Naive thymus-derived CD8-positive, alpha-beta T cell (primary cell): ENCODE measurements at regions of chr1 and their contacts with region 1.

Region 1: DNA sequence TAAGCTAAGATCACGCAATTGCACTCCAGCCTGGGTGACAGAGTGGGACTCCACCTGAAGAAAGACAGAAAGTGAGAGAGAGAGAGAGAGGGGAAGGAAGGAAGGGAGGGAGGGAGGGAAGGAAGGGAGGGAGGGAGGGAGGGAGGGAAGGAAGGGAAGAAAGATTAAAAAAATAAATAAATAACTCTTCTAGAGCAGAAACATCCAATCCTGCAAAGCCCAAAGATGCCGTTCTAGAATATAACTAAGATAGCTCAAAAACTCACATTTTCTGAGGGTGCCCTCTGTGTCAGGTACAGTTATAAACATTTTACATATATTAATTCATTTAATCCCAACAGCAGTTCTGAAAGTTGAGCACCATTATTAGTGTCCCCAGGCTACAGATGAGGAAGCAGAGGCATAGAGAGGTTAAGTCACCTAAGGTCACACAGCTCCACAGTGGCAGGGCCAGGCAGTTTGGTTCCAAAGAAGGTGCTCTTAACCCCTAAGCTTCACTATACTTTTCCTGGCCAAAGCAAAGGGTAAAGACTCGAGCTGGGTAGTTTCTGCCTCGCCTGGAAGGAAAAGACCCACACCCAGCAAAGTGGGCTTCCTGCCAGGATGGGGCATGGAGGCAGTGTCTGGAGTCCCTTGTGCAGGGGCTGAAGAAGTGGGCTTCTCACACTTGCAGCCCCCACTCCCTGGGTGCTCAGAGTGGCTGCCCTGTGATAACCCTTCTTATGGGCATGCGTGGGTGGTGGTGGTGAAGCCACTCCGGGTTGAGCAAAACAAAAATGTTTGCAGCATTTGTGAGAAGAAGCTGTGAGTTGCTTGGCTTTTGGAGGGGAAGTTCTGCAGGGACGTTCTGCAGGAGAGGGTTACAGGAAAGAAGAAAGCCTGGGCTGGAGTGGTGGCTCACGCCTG is 7.9 kb upstream of the PIK3CD start:
- DNase-seq: peak in 3 of 10 donors; percentile 18 to 55 (median 41)
- ATAC-seq: peak; percentile 48 to 64
- H3K4me3 Mint-ChIP-seq: peak overlapping the region; percentile 59 to 84 (median 76)
- H3K27ac Mint-ChIP-seq: peak overlapping the region; percentile 82 to 95 (median 92)
- H3K4me1 Mint-ChIP-seq: peaks cover 35 to 83% (median 79%) of the 10 kb centered on the region in 4 donors
- H3K27me3 Mint-ChIP-seq: no peaks in the 10 kb centered on the region

Region 2: DNA sequence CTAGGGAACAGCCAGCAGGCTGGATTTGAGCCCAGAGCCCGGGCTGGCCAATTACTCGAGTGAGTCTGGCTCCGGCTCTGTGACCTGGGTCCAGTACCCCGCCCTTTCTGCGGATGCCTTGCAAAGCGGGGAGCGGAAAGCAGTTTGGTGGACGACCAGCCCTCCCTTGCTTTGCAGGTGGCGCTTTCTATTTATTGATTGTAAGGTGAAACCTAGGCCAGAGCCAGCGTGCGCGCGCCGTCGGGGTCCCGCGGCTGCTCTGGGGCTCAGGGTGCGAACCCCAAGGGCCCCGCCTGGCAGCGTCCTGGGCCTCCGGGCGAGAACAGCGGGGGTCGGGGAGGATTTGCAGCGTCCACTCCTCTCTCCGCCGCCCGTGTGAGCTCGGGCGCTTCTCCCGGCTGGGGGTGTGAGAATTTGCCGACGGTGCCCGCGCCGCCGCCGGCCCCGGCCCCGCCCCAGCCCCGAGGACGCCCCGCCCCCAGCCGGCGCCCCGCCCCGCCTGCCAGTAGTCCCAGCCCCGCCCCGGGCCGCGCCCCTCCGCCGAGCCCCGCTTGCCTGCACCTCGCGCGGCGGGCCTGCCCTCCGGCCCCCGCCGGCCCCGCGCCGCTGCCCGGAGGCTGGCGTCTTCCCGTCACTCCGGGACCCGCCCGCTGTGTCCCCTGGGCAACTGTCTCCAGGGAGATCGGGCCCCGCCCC is 45.6 kb after region 1 on chr1:
- POLR2A ChIA-PET with region 1: interaction called, 20 read pairs
- DNase-seq: peak; percentile 70 to 96 (median 83)
- ATAC-seq: peak; percentile 67 to 77
- H3K4me3 Mint-ChIP-seq: peak overlapping the region; percentile 79 to 95 (median 86)
- H3K27ac Mint-ChIP-seq: peak overlapping the region; percentile 76 to 92 (median 88)
- H3K4me1 Mint-ChIP-seq: peaks cover 31 to 84% (median 79%) of the 10 kb centered on the region in 4 donors
- H3K27me3 Mint-ChIP-seq: no peaks in the 10 kb centered on the region

Region 3: GRCh38 chr1:9717193-9718005 is 73.8 kb after region 1 on chr1:
- POLR2A ChIA-PET with region 1: interaction called, 811 read pairs
- DNase-seq: peak; percentile 68 to 97 (median 90)
- ATAC-seq: peak; percentile 68 to 78
- H3K4me3 Mint-ChIP-seq: peak overlapping the region; percentile 85 to 98 (median 94)
- H3K27ac Mint-ChIP-seq: peak overlapping the region; percentile 82 to 100 (median 98)
- H3K4me1 Mint-ChIP-seq: peaks cover 24 to 77% (median 69%) of the 10 kb centered on the region in 4 donors
- H3K27me3 Mint-ChIP-seq: no peaks in the 10 kb centered on the region

Region 4: GRCh38 chr1:9724706-9725476 is 81.3 kb after region 1 on chr1:
- POLR2A ChIA-PET with region 1: interaction called, 811 read pairs
- DNase-seq: peak; percentile 49 to 82 (median 68)
- ATAC-seq: peak; percentile 13 to 16
- H3K4me3 Mint-ChIP-seq: peak overlapping the region in 7 of 10 donors; percentile 10 to 83 (median 53)
- H3K27ac Mint-ChIP-seq: peak overlapping the region; percentile 62 to 92 (median 84)
- H3K4me1 Mint-ChIP-seq: peaks cover 27 to 85% (median 71%) of the 10 kb centered on the region in 4 donors
- H3K27me3 Mint-ChIP-seq: no peaks in the 10 kb centered on the region

Region 5: DNA sequence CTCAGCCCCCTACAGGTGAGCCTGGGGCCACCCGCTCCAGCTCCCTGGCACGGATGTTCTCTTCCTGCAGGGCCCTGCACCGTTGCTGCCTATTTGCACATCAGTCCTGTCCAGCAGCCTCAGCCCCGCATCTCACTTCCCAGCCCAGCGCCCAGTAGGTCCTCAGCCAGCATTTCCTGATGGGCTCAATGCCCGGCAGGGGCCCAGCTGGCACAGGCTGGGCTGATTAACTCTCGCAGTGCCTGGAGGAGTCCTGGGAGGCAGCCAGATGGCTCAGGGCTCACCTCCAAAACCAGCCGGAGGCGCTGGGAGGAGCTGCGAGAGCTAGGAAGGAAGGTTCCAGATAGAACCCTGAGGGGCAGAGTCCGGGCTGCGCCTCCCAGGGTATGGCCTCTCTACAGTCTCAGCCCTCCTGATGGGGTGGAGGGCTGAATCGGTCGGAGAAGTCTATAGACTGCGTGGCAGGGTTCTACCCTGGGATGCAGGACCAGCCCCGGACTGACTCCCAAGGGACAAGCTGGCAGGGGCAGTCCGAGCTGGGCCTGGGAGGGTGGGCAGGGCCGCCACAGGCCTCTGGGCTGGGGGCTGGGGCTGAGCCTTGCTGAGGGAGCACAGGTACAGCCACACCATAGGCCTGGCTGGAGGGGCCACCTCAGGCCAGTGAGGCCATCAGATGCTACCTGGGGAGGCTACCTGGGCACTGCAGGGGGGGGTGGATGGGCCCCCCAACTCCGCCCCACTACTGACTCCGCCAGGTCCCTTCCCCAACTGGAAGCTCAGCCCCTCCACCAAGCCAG is 199.4 kb after region 1 on chr1:
- POLR2A ChIA-PET with region 1: no interaction called
- DNase-seq: no peak
- ATAC-seq: no peak
- H3K4me3 Mint-ChIP-seq: no peak overlapping the region
- H3K27ac Mint-ChIP-seq: no peak overlapping the region
- H3K4me1 Mint-ChIP-seq: peaks cover 0 to 6% (median 1%) of the 10 kb centered on the region in 4 donors
- H3K27me3 Mint-ChIP-seq: no peaks in the 10 kb centered on the region